Spleen (tissue), 13 donors: ENCODE measurements at regions of chr2 and their contacts with region 1.

Region 1: GRCh38 chr2:238370823-238371372 is 50.6 kb downstream of the TRAF3IP1 start:
- DNase-seq: no peak
- H3K4me3 ChIP-seq: no peak overlapping the region
- H3K27ac ChIP-seq: no peak overlapping the region
- H3K4me1 ChIP-seq: peaks cover 0 to 23% (median 4%) of the 10 kb centered on the region in 6 donors
- H3K27me3 ChIP-seq: no peaks in the 10 kb centered on the region
- CTCF ChIP-seq: peak; percentile 45 to 80 (median 60)
- POLR2A ChIP-seq: no peak

Region 2: GRCh38 chr2:237244976-237245646 is 1125.8 kb before region 1 on chr2:
- intact Hi-C with region 1: no loop called
- DNase-seq: no peak
- H3K4me3 ChIP-seq: no peak overlapping the region
- H3K27ac ChIP-seq: no peak overlapping the region
- H3K4me1 ChIP-seq: no peaks in the 10 kb centered on the region
- H3K27me3 ChIP-seq: peaks cover 0 to 15% (median 0%) of the 10 kb centered on the region in 7 donors
- CTCF ChIP-seq: no peak
- POLR2A ChIP-seq: no peak

Region 3: DNA sequence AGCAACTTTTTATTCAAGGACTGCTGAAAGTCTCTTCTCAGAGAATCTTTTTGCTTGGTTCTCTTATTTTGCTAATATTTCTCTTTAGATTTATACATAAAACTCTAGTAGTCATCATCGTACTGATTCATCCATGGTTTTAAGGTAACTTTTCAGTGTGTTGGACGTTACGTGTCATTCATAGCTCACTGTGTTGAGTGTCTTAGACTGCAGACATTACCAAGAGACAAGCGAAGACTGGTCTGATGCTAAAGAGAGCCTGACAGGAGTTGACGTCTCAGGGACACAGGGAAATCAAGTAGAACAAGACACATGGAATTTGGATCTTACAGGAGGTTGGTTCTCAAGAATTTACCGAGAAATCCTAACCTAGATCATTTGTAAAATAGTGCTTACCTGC is 546.8 kb before region 1 on chr2:
- intact Hi-C with region 1: no loop called
- DNase-seq: no peak
- H3K4me3 ChIP-seq: no peak overlapping the region
- H3K27ac ChIP-seq: no peak overlapping the region
- H3K4me1 ChIP-seq: no peaks in the 10 kb centered on the region
- H3K27me3 ChIP-seq: no peaks in the 10 kb centered on the region
- CTCF ChIP-seq: no peak
- POLR2A ChIP-seq: no peak

Region 4: GRCh38 chr2:238462782-238463396 is 92.0 kb after region 1 on chr2:
- intact Hi-C with region 1: loop called (anchors 5 kb)
- DNase-seq: no peak
- H3K4me3 ChIP-seq: no peak overlapping the region
- H3K27ac ChIP-seq: no peak overlapping the region
- H3K4me1 ChIP-seq: no peaks in the 10 kb centered on the region
- H3K27me3 ChIP-seq: no peaks in the 10 kb centered on the region
- CTCF ChIP-seq: peak; percentile 48 to 86 (median 73)
- POLR2A ChIP-seq: no peak

Region 5: GRCh38 chr2:238784671-238785527 is 414.0 kb after region 1 on chr2:
- intact Hi-C with region 1: loop called (anchors 5 kb)
- DNase-seq: no peak
- H3K4me3 ChIP-seq: no peak overlapping the region
- H3K27ac ChIP-seq: no peak overlapping the region
- H3K4me1 ChIP-seq: peaks cover 0 to 6% (median 0%) of the 10 kb centered on the region in 6 donors
- H3K27me3 ChIP-seq: peaks cover 0 to 15% (median 0%) of the 10 kb centered on the region in 7 donors
- CTCF ChIP-seq: peak; percentile 33 to 82 (median 69)
- POLR2A ChIP-seq: no peak